PC-9 (cell line): ENCODE measurements at regions of chr16 and their contacts with region 1.

Region 1: GRCh38 chr16:48623304-48624016 is 13.5 kb upstream of the N4BP1 start:
- DNase-seq: peak; percentile 64 to 92
- H3K4me3 ChIP-seq: peak overlapping the region; percentile 56
- H3K27ac ChIP-seq: no peak overlapping the region
- H3K4me1 ChIP-seq: 0 out of 2 replicates have a peak, but pooled peaks cover 8% of the 10 kb centered on the region
- H3K27me3 ChIP-seq: no peaks in the 10 kb centered on the region
- CTCF ChIP-seq: peak; percentile 95

Region 2: DNA sequence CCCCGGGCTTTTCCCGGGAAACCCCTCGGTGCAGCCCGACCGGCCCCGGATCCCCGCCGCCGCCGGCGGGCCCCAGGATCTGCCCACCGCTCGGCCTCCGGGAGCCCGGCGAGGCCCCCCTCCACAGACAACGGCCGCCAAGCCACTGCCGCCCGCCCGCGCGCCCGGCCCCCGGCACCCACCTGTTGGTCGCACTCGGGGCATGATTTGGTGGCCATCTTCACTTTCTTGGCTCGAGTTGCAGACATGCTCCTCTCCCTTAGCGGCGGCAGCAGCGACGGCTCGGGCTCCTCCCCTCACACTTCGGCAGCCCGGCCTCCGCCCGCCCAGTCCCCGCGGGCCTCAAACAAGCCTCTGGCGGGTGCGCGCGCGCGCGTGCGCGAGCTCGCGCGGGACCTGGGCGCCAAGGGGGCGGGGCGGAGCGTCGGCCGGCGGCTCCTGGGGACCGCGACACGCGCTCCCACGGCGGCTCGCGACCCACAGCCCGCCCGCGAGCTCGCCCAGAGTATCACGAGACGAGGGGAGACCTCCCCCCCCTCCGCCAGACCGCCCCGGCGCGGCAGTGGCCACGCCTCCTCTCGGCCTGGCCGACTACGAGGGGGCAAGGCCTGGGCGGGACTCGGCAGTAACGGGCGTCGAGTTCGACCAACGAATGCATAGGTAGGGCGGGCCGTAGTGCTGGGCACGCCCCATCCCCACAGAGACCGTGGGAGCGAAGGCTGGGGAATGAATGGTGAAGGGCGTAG is 1792.4 kb before region 1 on chr16 and contains the start of gene C16orf87:
- CTCF ChIA-PET with region 1: interaction called, 20 read pairs
- POLR2A ChIA-PET with region 1: no interaction called
- intact Hi-C with region 1: no loop called
- DNase-seq: peak; percentile 79 to 91
- H3K4me3 ChIP-seq: peak within 1 kb of the TSS; percentile 60
- H3K27ac ChIP-seq: peak within 1 kb of the TSS; percentile 26
- H3K4me1 ChIP-seq: peaks cover 17% of the 10 kb centered on the region; the same call in 1 of the 2 replicates
- H3K27me3 ChIP-seq: no peaks in the 10 kb centered on the region
- CTCF ChIP-seq: no peak
- total RNA-seq, gene C16orf87: 7.8 and 8.6 TPM in 2 replicates

Region 3: DNA sequence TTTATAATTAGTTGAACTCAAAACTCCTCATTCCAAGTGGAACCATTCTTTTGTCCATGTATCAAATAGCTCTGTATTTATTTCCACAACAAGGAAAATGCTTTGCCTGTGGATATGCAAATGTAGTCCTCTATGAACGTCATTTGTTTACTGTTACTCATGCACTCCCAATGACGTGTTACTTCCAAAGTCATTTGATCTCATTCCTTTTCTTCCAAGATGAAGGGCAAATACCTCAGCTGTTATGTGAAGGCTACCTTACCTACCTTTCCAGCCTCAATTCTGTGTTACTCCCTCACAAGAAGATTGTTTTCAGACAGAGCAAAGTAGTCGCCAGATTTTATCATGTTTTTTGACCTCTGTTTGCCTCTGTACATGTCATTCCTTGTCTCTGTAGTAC is 1246.3 kb before region 1 on chr16:
- CTCF ChIA-PET with region 1: no interaction called
- POLR2A ChIA-PET with region 1: interaction called, 15 read pairs
- intact Hi-C with region 1: no loop called
- DNase-seq: no peak
- H3K4me3 ChIP-seq: no peak overlapping the region
- H3K27ac ChIP-seq: no peak overlapping the region
- H3K4me1 ChIP-seq: no peaks in the 10 kb centered on the region
- H3K27me3 ChIP-seq: no peaks in the 10 kb centered on the region
- CTCF ChIP-seq: no peak

Region 4: DNA sequence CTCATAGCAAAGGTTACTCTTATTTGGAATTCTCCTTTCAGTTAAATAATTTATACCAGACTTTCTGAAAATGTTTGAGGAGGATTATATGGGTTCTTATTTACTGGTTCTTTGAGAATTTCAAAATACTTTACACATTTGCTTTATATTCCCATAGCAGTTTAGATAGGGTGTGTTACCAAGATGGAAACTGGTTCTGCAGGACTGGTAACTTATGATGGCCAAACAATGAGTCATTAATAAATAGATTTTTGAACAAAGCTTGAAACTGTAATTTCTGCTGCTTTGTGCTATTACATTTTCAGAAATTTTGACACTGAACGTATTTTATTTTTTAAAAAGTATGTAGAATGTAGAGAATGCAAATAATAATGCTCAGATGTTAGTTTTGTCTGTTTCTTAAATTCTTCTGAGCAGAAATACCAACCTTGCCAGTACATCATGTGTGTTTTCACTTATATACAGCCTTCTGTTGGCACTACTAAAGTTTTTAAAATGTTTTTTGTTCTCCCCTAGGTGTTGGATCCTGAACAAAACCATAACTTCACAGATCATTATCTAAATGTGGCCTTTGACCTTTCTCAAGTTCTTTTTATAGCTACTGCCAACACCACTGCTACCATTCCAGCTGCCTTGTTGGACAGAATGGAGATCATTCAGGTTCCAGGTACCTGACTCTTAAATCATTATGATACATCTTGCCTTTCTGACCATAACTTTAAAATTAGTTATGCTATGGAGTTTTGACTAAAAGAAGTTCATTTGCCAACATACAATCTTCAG is 327.8 kb before region 1 on chr16:
- CTCF ChIA-PET with region 1: no interaction called
- POLR2A ChIA-PET with region 1: no interaction called
- intact Hi-C with region 1: loop called (anchors 5 kb)
- DNase-seq: peak in 1 of 2 experiments; percentile 87
- H3K4me3 ChIP-seq: peak overlapping the region; percentile 8; the same call in 1 of the 2 replicates
- H3K27ac ChIP-seq: peak overlapping the region; percentile 78
- H3K4me1 ChIP-seq: peaks cover 50% of the 10 kb centered on the region
- H3K27me3 ChIP-seq: no peaks in the 10 kb centered on the region
- CTCF ChIP-seq: no peak

Region 5: DNA sequence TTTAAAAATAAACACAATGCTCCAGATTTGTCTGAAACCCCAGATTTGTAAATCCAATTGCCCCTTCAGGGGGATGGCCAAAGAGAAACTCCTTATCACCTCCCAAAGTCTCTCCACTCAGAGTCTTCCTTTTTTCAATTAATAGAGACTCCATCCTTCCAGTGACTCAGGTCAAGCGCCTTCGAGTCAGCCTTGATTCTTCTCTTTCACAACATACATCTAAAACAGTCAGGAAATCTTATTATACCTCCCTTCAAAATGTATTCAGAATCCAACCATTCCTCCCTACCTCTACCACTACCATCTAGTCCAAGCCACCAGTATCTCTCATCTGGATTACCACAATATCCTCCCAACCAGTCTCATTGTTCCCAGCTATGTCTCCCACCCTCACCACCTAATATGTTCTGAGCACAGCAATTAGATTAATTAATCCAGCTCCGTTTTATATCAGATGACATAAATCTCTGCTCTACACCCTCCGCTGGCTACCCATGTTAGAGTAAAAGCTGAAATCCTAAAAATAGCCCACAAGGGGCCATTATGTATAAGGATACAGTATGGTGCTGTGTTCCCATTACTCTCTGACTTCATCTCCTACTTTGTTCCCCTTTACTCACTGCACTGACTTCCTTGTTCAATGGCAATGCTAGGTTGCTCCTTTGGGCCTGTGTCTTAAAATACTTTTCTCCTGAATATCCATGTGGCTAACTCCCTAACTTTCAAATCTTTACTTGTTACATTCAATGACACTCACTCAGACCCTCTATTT is 250.0 kb before region 1 on chr16:
- CTCF ChIA-PET with region 1: interaction called, 19 read pairs
- POLR2A ChIA-PET with region 1: no interaction called
- intact Hi-C with region 1: no loop called
- DNase-seq: no peak
- H3K4me3 ChIP-seq: no peak overlapping the region
- H3K27ac ChIP-seq: no peak overlapping the region
- H3K4me1 ChIP-seq: peaks cover 10% of the 10 kb centered on the region; the same call in 1 of the 2 replicates
- H3K27me3 ChIP-seq: no peaks in the 10 kb centered on the region
- CTCF ChIP-seq: no peak

Region 6: DNA sequence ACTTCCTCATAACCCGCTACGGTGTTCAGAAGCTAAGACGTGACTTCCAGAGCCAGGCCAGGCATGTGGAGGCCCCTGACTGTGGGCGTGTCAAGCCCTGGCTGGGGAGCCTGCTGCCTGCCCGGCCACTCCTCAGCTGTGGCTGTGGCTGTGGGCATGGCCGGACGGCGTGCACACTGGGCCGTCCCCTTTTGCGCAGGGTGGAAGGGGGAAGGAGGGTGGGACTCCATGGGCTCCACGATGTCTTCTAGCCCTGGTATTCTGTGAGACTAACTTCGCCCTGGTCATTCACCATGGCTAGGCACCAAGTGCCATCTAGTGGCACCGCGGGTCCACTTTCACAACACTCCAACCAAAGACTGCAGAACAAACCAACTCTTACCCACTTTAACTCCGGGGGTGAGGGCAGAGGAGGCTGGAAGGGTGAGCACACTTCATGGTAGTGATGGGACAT is 81.4 kb before region 1 on chr16:
- CTCF ChIA-PET with region 1: interaction called, 5 read pairs
- POLR2A ChIA-PET with region 1: no interaction called
- intact Hi-C with region 1: loop called (anchors 2 kb)
- DNase-seq: peak in 1 of 2 experiments; percentile 21
- H3K4me3 ChIP-seq: no peak overlapping the region
- H3K27ac ChIP-seq: no peak overlapping the region
- H3K4me1 ChIP-seq: no peaks in the 10 kb centered on the region
- H3K27me3 ChIP-seq: no peaks in the 10 kb centered on the region
- CTCF ChIP-seq: peak; percentile 61

Region 7: DNA sequence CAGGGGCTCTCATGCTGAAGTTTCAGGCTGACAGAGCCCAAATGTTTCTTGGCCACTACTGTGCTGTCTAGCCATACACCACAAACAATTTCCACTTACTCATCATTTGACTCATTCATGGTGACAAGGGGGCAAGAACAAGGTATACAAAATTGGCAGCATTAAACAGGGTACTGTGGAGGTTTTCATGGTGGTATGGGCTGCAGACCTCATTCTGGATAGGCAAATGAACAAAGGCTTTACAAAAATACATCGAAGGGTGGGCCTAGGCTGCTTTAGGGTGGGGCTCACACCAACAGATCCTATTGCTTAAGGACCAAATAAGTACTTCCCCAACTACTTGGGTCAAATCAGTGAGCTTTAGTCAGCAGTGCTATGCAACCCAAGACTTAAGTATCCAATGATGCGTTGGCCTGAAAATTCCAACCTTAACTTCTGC is 66.5 kb before region 1 on chr16:
- CTCF ChIA-PET with region 1: no interaction called
- POLR2A ChIA-PET with region 1: no interaction called
- intact Hi-C with region 1: no loop called
- DNase-seq: no peak
- H3K4me3 ChIP-seq: no peak overlapping the region
- H3K27ac ChIP-seq: no peak overlapping the region
- H3K4me1 ChIP-seq: no peaks in the 10 kb centered on the region
- H3K27me3 ChIP-seq: no peaks in the 10 kb centered on the region
- CTCF ChIP-seq: no peak